ENCODE measurements at regions of chr3 and their contacts with region 1.

Region 1: DNA sequence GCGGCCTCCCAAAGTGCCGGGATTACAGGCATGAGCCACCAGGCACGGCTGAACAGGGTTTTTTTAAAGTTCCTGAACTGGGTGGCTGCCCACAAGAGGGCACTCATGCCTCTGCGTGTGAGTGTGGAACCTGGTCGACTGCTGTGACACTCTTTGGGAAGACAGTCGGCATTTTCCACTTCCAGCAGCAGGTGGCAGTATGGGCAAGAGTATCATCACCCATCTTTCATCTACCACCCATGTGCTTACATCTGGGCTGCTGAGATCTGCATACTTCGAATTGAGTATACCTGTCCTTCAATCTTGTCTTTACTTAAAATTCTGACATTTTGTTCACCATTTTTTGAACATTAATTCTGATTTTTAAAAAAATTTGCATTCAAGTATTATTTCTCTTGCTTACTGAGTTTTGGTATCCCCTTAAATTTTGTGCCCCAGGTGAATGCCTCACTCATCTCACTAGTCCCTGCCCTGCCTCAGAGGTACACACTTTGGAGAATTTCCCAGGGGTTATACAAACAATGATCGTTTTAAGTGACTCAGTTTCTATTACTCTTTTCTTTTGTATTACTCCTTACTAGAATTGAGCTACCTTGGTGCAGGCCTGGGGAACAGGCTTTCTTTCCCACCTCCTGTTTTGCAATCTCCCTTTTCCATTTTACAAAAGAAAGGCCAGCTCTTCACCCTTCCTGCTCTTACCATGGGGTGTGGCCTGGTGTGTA is 11.8 kb downstream of the CLEC3B start:
- DNase-seq: peak; percentile 97
- H3K4me3 Mint-ChIP-seq: peak overlapping the region; percentile 17
- H3K27ac Mint-ChIP-seq: no peak overlapping the region
- H3K4me1 Mint-ChIP-seq: peaks cover 41% of the 10 kb centered on the region
- H3K27me3 Mint-ChIP-seq: peaks cover 16% of the 10 kb centered on the region

Region 2: GRCh38 chr3:44642337-44642736 is 395.6 kb before region 1 on chr3:
- CTCF ChIA-PET with region 1: no interaction called
- intact Hi-C with region 1: no loop called
- DNase-seq: no peak
- H3K4me3 Mint-ChIP-seq: no peak overlapping the region
- H3K27ac Mint-ChIP-seq: no peak overlapping the region
- H3K4me1 Mint-ChIP-seq: no peaks in the 10 kb centered on the region
- H3K27me3 Mint-ChIP-seq: no peaks in the 10 kb centered on the region

Region 3: DNA sequence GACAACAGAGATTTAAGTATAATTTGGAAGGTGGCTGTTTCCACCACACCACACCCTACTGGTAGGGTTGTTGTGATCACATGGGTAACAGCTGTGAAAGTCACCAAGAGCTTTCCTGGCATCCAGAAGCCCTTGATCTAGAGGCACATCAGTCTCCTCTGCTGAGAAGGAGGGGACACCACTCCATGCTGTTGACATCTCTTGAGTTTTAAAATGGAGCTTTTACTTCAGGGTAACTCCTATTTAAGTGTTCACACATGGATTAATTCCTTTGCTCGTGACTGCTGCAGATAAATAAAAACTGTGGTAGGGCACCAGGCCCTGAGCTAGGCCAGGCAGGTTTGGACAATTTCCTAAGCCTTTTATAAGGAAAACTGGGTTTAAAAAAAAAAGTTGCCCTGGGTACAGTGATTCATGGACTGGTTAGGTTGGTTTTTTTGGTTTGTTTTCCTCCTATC is 54.4 kb before region 1 on chr3:
- CTCF ChIA-PET with region 1: no interaction called
- intact Hi-C with region 1: no loop called
- DNase-seq: no peak
- H3K4me3 Mint-ChIP-seq: no peak overlapping the region
- H3K27ac Mint-ChIP-seq: no peak overlapping the region
- H3K4me1 Mint-ChIP-seq: peaks cover 78% of the 10 kb centered on the region
- H3K27me3 Mint-ChIP-seq: no peaks in the 10 kb centered on the region

Region 4: DNA sequence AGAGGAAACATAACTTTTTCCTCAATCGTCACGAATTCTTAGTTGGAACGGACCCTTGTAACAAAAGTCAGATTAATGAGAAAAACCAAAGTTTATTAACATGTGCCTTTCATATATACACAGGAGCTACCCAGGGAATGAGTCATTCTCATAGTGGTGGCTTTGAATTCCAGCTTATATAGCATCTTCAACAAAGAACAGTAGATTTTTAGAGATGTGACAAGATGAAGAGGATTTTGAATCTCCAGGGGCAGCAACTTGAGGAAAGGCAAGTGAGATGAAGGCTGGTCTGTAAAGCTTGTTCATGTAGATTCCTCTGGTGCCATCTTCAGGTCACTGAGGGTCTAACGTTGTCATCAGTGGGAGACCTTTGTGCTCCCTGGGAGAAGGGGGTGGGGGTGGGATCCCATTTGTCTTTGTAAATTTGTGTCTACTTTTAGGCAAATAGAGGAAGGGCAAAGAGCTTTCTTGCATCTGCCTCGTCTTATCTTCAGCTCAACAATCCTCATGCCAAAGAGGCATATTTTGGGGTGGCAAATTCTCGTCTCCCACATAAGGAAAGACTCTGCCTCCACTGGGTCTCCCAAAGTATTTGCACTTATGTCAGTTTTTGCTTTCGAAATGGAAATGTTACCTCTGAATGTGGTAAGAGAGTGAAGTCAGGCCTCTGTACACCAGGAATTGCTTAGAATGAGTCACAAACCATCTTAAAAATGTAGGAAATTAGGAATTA is 17.7 kb after region 1 on chr3:
- CTCF ChIA-PET with region 1: interaction called, 49 read pairs
- intact Hi-C with region 1: loop called (anchors 2 kb)
- DNase-seq: peak; percentile 38
- H3K4me3 Mint-ChIP-seq: no peak overlapping the region
- H3K27ac Mint-ChIP-seq: no peak overlapping the region
- H3K4me1 Mint-ChIP-seq: peaks cover 11% of the 10 kb centered on the region
- H3K27me3 Mint-ChIP-seq: no peaks in the 10 kb centered on the region

Region 5: DNA sequence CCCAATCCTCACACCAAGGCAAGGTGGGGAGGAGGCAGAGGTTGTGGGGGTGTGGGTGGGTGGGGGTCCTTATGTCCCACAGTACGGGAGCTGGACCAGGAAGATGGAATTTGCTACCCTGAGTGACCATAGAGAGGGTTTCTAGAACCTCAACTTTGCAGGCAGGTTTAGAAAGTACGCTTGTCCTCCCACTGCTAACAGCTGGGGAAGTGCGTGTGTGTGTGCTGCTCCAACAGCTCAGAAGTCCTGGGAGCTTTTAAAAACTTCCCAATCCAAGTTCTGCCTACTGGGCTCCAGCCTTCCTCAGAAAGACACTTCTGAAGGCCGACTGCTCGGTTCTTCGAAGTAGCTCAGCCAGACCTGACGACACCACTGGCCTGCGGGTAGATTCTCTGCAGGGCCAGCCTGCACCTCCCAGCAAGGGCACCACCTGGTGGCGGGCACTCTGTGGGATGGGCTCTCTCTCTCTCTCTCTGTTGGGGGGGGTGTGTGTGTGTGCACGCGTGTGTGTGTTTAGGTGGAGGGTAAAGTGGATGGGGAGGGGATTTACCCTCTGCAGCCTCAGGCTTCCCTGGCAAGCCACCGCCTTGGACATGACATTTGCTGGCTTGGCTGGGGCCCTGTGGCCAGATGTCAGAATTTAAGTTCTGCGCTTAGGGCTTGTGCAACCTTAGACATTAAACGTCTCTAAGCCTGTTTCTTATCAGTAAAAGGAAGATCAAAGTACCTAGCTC is 172.6 kb after region 1 on chr3:
- CTCF ChIA-PET with region 1: interaction called, 299 read pairs
- intact Hi-C with region 1: loop called (anchors 1 kb)
- DNase-seq: peak; percentile 86
- H3K4me3 Mint-ChIP-seq: no peak overlapping the region
- H3K27ac Mint-ChIP-seq: no peak overlapping the region
- H3K4me1 Mint-ChIP-seq: peaks cover 11% of the 10 kb centered on the region
- H3K27me3 Mint-ChIP-seq: peaks cover 3% of the 10 kb centered on the region

Region 6: GRCh38 chr3:45499529-45499928 is 461.6 kb after region 1 on chr3:
- CTCF ChIA-PET with region 1: interaction called, 5 read pairs
- intact Hi-C with region 1: loop called (anchors 1 kb)
- DNase-seq: no peak
- H3K4me3 Mint-ChIP-seq: no peak overlapping the region
- H3K27ac Mint-ChIP-seq: no peak overlapping the region
- H3K4me1 Mint-ChIP-seq: peaks cover 25% of the 10 kb centered on the region
- H3K27me3 Mint-ChIP-seq: no peaks in the 10 kb centered on the region

Region 7: GRCh38 chr3:45929042-45929679 is 891.3 kb after region 1 on chr3:
- CTCF ChIA-PET with region 1: no interaction called
- intact Hi-C with region 1: loop called (anchors 2 kb)
- DNase-seq: peak; percentile 76
- H3K4me3 Mint-ChIP-seq: no peak overlapping the region
- H3K27ac Mint-ChIP-seq: no peak overlapping the region
- H3K4me1 Mint-ChIP-seq: no peaks in the 10 kb centered on the region
- H3K27me3 Mint-ChIP-seq: no peaks in the 10 kb centered on the region